ENCODE measurements at regions of chr20 and their contacts with region 1.

Region 1: GRCh38 chr20:62029296-62029695 is 36.4 kb downstream of the TAF4 start:
- DNase-seq: no peak
- H3K4me3 Mint-ChIP-seq: no peak overlapping the region
- H3K27ac Mint-ChIP-seq: peak overlapping the region; percentile 39
- H3K4me1 Mint-ChIP-seq: peaks cover 56% of the 10 kb centered on the region
- H3K27me3 Mint-ChIP-seq: no peaks in the 10 kb centered on the region

Region 2: DNA sequence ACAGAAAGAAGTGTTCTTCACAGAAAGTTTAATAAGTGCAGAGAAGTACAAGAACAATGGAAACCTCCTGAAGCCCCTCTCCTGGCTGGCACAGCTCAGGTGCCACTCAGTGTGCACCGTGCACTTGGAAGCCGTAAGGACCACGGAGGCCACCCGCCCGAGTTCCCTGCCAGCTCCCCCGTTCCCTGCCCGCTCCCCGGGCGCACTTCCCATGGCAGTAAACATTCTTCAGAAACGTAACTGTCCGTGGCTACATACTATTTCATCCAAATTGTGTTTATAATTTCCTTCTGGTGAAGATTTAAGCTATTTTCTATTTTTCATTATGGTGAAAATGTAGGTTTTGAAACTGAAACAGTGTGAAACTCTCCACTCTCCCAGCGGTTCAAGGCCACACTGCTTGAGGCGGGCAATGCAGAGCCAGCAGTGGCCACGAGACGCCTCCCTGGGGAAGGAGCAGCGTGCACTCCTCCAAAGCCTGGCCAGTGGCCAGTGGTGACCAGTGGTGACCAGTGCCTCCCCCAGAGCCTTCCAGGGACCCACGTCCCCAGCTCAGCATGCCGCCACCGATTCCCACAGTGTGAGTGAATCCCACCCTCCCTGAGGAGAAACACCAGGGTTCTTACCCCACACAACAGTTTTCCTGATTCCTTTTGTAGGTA is 10.0 kb before region 1 on chr20:
- CTCF ChIA-PET with region 1: no interaction called
- POLR2A ChIA-PET with region 1: no interaction called
- DNase-seq: no peak
- H3K4me3 Mint-ChIP-seq: no peak overlapping the region
- H3K27ac Mint-ChIP-seq: no peak overlapping the region
- H3K4me1 Mint-ChIP-seq: peaks cover 1% of the 10 kb centered on the region
- H3K27me3 Mint-ChIP-seq: no peaks in the 10 kb centered on the region

Region 3: DNA sequence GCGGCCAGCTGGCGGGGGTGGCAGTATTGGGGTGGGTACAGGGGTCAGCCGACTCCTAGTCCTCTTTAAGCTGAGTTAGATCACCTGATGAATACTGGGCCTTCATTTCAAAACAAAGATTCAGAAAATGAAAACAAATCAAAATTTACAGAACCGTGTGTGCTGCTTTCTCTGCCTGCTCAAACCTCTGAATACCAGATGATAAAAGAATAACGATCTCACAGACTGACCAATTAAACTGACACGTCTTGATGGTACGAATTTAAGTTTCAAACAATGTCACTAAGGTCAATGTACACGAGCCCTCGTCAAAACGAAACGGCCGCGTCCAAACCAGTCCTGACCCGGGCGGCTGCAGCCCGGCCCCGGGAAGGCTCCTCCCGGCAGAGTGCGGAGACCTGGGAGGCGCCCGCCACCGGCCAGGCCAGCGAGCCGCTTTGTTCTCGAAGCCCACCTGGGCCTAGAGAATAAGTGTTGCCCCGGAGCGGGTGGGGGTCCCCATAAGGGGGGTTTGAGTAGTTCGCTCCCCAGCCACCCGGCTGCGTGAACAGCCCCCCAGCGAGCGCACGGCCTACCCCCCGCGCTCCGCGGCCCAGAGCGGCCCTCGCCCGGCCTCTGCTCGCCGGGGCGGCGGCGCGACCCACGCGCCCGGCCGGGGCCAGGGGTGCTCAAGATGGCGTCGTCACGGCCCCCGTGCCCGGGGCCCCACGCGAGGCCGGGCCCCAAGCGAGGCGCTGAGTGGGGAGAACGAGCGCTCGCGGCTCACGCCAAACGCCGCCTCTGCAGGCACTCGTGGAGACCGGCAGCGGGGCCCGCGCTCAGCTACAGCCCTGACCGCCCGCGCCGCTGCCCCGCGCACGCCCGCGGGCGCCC is 113.2 kb after region 1 on chr20:
- CTCF ChIA-PET with region 1: interaction called, 4 read pairs
- POLR2A ChIA-PET with region 1: interaction called, 13 read pairs
- DNase-seq: no peak
- H3K4me3 Mint-ChIP-seq: peak overlapping the region; percentile 81
- H3K27ac Mint-ChIP-seq: peak overlapping the region; percentile 92
- H3K4me1 Mint-ChIP-seq: peaks cover 62% of the 10 kb centered on the region
- H3K27me3 Mint-ChIP-seq: no peaks in the 10 kb centered on the region

Measured in activated CD4-positive, alpha-beta T cell treated with anti-CD3 and anti-CD28 coated beads, Interleukin-2, amount 10 ng/mL, durations not matched to agents 7 days and 5 days (primary cell).